BJ (cell line): ENCODE measurements at regions of chr4 and their contacts with region 1.

Region 1: GRCh38 chr4:83455281-83456129 is at the starts of genes HELQ and MRPS18C:
- DNase-seq: peak; percentile 92
- H3K4me3 ChIP-seq: peak within 1 kb of the TSS; percentile 84
- H3K27me3 ChIP-seq: no peaks in the 10 kb centered on the region
- CTCF ChIP-seq: peak; percentile 50
- polyA plus RNA-seq, gene HELQ: 9.6 and 12.8 TPM in 2 replicates
- polyA plus RNA-seq, gene MRPS18C: 16.4 and 31.8 TPM in 2 replicates

Region 2: DNA sequence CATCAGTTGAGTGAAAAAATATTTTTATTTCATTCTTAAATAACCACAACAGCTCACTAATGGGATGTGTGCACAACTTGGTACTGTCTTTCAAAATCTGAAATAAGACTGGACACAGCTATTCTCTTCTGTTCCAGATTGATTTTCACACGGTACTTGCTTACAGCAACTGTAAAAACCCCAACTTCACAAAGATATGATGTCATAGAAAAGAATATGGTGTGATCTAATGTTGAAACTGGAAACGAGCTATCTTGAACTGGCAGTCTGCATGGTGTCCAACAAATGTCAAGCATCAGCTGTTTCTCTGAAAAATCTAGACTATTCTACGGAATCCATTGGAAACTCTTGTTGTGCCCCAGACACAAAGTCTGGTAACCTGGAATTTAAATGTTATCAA is 14.6 kb before region 1 on chr4:
- CTCF ChIA-PET with region 1: interaction called, 10 read pairs
- POLR2A ChIA-PET with region 1: no interaction called
- DNase-seq: no peak
- H3K4me3 ChIP-seq: no peak overlapping the region
- H3K27me3 ChIP-seq: no peaks in the 10 kb centered on the region
- CTCF ChIP-seq: no peak

Region 3: DNA sequence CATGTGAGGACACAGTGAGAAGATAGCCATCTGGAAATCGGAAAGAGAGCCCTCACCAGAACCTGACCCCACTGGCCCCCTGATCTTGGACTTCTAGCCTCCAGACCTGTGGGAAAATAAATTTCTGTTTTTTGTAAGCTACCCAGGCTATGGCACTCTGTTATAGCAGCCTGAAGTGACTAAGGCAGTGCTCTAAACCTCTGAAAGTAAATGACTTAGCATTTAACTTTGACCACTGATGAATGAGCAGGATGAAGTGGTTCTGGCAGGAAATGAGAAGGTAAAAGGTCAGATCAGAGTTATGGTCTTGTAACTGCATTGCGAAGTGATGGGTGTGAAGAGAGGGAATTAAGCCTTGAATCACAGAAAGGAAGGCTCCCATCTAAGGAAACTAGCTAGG is 97.4 kb after region 1 on chr4:
- CTCF ChIA-PET with region 1: no interaction called
- POLR2A ChIA-PET with region 1: no interaction called
- DNase-seq: no peak
- H3K4me3 ChIP-seq: no peak overlapping the region
- H3K27me3 ChIP-seq: no peaks in the 10 kb centered on the region
- CTCF ChIP-seq: no peak